Activated CD4-positive, alpha-beta T cell treated with anti-CD3 and anti-CD28 coated beads for 36 hours (primary cell): ENCODE measurements at regions of chr16 and their contacts with region 1.

Region 1: DNA sequence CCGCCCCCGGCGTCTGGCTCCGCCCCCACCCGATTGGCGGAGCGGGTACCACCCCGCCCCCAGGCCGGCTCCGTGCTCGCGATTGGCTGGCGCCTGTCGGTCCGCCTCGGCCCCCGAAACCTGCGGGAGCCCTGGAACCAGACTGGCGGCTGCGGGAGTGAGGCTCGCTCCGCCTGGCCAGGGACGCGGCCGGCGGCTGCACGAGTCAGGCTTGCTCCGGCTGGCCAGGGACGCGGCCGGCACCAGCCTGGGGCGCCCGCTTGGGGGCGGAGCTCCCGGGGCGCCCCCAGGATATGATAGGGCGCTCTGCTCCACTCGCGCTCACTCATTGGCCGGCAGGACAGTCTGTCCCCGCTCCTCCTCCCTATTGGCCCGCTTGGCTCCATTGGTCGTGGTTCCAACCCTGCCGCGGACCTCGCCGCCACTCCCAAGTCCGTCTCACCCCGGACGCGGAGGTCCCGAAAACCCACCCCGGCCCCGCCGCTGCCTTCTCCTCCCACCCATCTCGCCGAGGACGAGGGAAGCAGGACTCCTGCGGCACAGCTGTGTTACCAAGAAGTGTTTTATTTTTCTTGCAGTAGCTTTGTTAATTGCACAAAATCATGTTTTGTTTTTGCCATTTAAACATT is 340 bp upstream of the ROGDI start:
- DNase-seq: peak; percentile 92
- ATAC-seq: peak; percentile 98
- H3K4me3 Mint-ChIP-seq: peak overlapping the region; percentile 74
- H3K27ac Mint-ChIP-seq: peak overlapping the region; percentile 58
- H3K4me1 Mint-ChIP-seq: peaks cover 14% of the 10 kb centered on the region
- H3K27me3 Mint-ChIP-seq: no peaks in the 10 kb centered on the region

Region 2: GRCh38 chr16:4766874-4767628 is 35.7 kb before region 1 on chr16 and contains the start of gene ZNF500:
- CTCF ChIA-PET with region 1: no interaction called
- POLR2A ChIA-PET with region 1: interaction called, 4 read pairs
- intact Hi-C with region 1: loop called (anchors 1 kb)
- DNase-seq: peak; percentile 97
- ATAC-seq: peak; percentile 78
- H3K4me3 Mint-ChIP-seq: peak within 1 kb of the TSS; percentile 89
- H3K27ac Mint-ChIP-seq: peak within 1 kb of the TSS; percentile 91
- H3K4me1 Mint-ChIP-seq: peaks cover 25% of the 10 kb centered on the region
- H3K27me3 Mint-ChIP-seq: no peaks in the 10 kb centered on the region
- total RNA-seq, gene ZNF500: 10.3 to 11.6 TPM

Region 3: DNA sequence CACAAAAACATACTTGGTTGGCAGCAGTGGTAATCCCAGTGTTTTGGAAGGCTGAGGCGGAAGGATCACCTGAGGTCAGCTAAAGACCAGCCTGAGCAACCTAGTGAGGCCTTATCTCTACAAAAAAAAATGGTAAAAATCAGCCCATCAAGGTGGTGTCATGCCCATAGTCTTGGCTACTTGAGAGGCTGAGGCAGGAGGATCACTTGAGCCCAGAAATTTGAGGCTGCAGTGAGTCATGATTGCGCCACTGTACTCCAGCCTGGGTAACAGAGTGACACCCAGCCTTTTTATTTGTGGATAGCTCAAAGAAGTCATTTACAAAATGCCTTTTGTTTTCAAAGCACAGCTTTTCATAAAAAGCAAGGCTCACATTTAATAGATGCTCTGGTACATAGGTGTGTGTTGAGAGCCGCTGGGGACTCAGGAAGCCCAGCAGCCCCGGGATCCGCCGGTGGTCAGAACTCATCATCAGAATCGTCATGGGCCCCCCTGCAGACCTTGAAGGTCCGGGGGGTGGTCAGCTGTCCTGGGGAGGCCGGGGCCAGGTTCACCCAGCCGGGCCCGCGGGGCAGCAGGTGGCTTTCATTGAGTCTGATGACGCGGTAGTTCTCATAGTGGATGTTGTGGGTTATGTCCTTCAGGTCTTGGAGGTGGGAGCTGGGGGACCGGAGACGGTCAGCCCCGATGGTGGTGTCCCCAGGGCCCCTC is 25.3 kb before region 1 on chr16:
- CTCF ChIA-PET with region 1: no interaction called
- POLR2A ChIA-PET with region 1: no interaction called
- intact Hi-C with region 1: no loop called
- DNase-seq: no peak
- ATAC-seq: no peak
- H3K4me3 Mint-ChIP-seq: no peak overlapping the region
- H3K27ac Mint-ChIP-seq: no peak overlapping the region
- H3K4me1 Mint-ChIP-seq: no peaks in the 10 kb centered on the region
- H3K27me3 Mint-ChIP-seq: no peaks in the 10 kb centered on the region

Region 4: GRCh38 chr16:4957720-4958509 is 155.1 kb after region 1 on chr16 and contains the start of gene SEC14L5:
- CTCF ChIA-PET with region 1: no interaction called
- POLR2A ChIA-PET with region 1: no interaction called
- intact Hi-C with region 1: loop called in 1 of 2 experiments (anchors 1 kb)
- DNase-seq: peak; percentile 98
- ATAC-seq: peak; percentile 95
- H3K4me3 Mint-ChIP-seq: peak within 1 kb of the TSS; percentile 75
- H3K27ac Mint-ChIP-seq: peak within 1 kb of the TSS; percentile 1
- H3K4me1 Mint-ChIP-seq: peaks cover 12% of the 10 kb centered on the region
- H3K27me3 Mint-ChIP-seq: peaks cover 33% of the 10 kb centered on the region
- total RNA-seq, gene SEC14L5: 0.09 to 0.28 TPM

Region 5: DNA sequence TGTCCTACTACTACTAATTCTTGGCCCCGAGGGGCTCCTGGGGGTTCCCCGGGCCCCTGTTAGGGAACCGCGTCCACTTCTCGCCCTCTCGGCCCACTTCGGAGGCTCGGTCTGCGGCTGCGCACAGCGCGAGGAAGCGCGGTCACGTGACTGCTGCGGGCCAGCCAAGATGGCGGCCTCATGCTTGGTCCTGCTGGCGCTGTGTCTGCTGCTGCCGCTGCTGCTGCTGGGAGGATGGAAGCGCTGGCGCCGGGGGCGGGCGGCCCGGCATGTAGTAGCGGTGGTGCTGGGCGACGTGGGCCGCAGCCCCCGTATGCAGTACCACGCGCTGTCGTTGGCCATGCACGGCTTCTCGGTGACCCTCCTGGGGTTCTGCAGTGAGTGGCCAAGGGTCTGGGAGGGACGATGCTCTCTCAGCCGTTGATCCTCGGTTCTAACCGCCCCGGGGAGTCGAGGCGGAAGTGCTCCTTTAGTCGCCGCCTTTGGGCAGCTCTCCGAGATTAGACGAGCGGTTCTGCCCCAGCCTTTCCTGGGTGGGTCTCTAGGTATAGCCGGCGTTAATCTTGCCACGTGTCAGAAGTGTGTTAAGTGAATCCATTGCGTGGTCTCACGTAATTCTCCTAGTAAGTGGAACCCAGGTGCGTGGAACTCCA is 269.0 kb after region 1 on chr16 and contains the start of gene ALG1:
- CTCF ChIA-PET with region 1: no interaction called
- POLR2A ChIA-PET with region 1: no interaction called
- intact Hi-C with region 1: loop called in 1 of 2 experiments (anchors 2 kb)
- DNase-seq: peak; percentile 94
- ATAC-seq: peak; percentile 97
- H3K4me3 Mint-ChIP-seq: peak within 1 kb of the TSS; percentile 90
- H3K27ac Mint-ChIP-seq: peak within 1 kb of the TSS; percentile 90
- H3K4me1 Mint-ChIP-seq: peaks cover 21% of the 10 kb centered on the region
- H3K27me3 Mint-ChIP-seq: no peaks in the 10 kb centered on the region
- total RNA-seq, gene ALG1: 15.7 to 18.1 TPM

Region 6: GRCh38 chr16:5865236-5865635 is 1062.5 kb after region 1 on chr16:
- CTCF ChIA-PET with region 1: no interaction called
- POLR2A ChIA-PET with region 1: no interaction called
- intact Hi-C with region 1: no loop called
- DNase-seq: no peak
- ATAC-seq: no peak
- H3K4me3 Mint-ChIP-seq: no peak overlapping the region
- H3K27ac Mint-ChIP-seq: no peak overlapping the region
- H3K4me1 Mint-ChIP-seq: no peaks in the 10 kb centered on the region
- H3K27me3 Mint-ChIP-seq: peaks cover 4% of the 10 kb centered on the region